ENCODE measurements at regions of chr20 and their contacts with region 1.

Region 1: DNA sequence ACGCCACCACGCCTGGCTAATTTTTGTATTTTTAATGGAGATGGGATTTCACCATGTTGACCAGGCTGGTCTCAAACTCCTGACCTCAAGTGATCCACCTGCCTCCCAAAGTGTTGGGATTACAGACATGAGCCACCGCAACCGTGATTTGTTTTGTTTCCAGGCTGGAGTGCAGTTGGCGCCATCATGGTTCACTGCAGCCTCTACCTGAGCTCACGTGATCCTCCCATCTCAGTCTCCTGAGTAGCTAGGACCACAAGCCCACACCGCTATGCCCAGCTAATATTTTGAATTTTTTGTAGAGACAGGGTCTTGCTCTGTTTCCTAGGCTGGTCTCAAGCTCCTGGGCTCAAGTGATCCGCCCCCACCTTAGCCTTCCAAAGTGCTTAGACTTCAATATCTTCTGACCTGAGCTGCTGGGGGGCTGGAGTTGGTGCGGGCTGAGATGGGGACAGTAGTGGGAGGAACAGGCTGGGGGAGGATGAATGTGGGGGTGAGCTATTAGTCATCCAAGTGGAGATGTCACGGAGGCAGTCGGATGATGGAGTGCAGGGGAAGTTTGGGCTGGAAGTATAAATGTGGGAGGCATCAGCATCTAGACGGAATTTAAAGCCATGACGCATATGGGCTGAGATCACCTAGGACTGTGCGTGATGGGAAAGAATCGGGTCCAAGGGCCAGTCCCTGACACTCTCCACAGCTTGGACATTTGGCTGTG is 23.1 kb upstream of the ZMYND8 start:
- DNase-seq: no peak
- CTCF ChIP-seq: no peak

Region 2: GRCh38 chr20:47196091-47197081 is 183.2 kb before region 1 on chr20:
- CTCF ChIA-PET with region 1: interaction called, 161 read pairs
- POLR2A ChIA-PET with region 1: no interaction called
- DNase-seq: peak; percentile 84
- CTCF ChIP-seq: peak; percentile 98

Region 3: DNA sequence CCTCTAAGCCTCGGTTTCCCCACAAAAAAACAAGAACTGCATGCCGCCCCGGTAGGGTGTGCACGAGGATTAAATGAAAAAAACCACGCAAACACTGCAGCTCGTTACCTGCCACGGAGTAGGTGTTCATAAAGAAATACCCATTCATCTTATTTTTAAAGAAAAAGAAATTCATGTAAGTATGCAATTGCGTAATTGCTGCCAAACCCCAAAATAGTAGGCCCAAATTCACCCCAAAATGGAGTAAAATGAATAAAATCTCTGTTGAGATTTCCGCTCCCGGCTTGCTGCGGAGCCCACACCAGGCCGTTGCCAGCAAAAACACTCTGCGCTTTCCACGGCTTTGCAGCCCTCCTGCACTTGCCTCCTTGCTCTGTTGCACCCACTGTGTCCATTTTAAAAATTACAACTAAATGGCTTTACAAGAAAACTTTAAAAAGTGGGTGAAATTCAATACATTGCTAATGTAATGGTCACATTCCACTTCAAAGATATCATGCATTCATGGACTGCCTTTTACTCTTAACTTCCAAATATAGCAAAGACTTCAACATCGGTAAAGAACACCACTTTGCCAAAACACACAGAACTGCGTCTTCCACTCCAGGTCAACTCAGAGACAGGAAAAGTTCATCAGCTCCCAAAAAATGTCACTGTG is 148.1 kb before region 1 on chr20:
- CTCF ChIA-PET with region 1: interaction called, 11 read pairs
- POLR2A ChIA-PET with region 1: no interaction called
- DNase-seq: no peak
- CTCF ChIP-seq: no peak

Region 4: GRCh38 chr20:47272893-47273590 is 106.5 kb before region 1 on chr20:
- CTCF ChIA-PET with region 1: interaction called, 337 read pairs
- POLR2A ChIA-PET with region 1: interaction called, 4 read pairs
- DNase-seq: peak; percentile 61
- CTCF ChIP-seq: peak; percentile 81

Region 5: DNA sequence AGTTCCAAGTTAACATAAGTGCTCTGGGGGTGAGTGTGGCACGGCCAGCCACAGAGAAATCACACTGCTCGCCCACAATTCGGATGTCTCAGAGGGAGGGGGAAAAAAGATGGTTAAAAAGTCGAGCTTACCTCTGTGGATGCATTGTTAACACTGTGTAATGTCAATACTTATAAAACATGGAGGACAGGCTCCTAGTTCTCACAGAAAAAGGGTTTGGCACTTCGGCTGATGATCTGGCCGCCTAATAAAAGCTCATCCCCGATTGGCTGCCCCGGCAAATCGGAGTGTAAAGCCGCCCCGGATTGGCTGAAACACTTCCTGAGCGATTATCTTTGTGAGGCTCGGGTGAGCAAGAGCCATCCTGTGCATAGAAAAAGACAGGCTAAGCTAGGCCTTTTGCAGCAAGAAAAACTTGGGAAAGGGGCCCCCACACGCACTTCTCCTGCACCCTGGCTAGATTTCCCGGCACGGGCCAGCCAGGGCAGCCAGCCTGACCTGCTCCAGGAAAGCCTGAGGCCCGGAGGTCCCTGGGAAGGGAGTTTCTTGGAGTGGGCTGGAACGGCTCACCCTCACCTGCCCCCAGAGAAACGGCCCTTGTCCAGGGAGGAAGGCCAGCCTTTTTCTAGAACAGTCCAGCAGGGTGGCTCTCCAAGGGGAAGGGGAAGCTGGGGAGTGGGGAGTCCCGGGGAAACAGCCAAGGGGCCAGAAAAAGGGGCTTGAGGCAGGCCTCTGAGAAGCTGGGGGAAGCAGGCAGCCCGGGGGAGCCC is 22.9 kb before region 1 on chr20 and contains the start of gene ZMYND8:
- CTCF ChIA-PET with region 1: interaction called, 203 read pairs
- POLR2A ChIA-PET with region 1: interaction called, 3 read pairs
- DNase-seq: peak; percentile 92
- CTCF ChIP-seq: no peak

Region 6: DNA sequence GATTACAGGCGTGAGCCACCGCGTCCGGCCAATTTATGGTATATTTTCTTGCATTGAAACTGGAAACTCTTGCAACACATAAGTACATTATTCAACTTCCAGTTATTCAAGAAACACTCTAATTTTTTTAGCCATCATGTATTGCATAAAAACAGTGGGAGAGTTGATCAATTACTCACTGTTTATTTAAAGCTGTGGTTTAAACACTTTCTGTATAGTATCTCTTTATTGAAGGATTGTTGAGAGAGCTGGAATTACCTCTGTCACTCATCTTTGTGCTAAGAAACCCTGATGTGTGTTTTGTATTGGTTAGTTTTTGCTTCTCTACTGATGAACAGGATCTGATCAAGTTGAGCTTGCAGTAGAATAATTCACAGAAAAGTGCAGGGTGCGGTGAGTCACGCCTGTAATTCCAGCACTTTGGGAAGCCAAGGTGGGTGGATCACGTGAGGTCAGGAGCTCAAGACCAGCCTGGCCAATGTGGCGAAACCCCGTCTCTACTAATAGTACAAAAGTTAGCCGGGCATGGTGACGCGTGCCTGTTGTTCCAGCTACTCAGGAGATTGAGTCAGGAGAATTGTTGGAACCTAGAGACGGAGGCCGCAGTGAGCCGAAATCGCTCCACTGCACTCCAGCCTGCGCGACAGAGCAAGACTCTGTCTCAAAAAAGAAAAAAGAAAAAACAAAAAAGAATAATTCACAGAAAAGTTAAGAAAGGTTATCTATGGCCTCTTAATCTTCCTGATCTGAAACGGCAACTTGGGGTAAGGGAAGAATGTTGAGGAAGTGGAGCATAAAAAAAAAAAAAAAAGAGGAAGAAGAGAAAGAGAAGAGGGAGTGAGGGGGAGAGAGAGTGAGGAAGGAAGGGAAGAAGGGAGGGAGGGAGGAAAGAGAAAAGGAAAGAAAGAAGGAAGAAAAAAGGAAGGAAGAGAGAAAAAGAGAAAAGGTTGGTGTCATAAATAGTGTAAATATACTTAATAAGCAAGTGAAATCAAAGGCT is 52.9 kb after region 1 on chr20:
- CTCF ChIA-PET with region 1: interaction called, 13 read pairs
- POLR2A ChIA-PET with region 1: no interaction called
- DNase-seq: no peak
- CTCF ChIP-seq: no peak